SK-N-SH (cell line): ENCODE measurements at regions of chr7 and their contacts with region 1.

Region 1: DNA sequence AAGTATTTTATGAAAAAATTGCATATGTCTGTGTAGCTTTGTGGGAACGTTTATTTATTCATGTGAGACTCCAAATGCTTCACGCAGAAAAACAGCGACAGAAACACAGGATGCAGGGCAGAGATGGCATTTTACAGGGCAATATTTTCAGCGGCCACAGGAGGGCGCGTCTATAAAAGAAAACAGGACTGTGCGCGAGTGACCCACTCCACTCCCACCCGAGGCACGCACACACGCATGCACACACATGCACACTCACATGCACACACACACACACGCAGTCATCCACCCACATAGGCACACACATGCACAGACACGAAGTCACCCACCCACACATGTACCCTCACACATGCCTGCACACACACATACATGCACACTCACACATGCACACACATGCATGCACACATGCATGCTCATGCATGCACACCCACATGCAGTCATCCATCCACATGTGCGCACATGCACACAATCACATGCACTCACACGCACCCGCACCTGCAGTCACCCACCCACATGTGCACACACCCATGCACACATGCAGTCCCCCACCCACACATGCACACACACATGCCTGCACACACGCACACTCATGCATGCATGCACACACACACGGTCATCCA is 96.3 kb downstream of the DNAJB6 start:
- DNase-seq: peak; percentile 88
- H3K4me3 ChIP-seq: no peak overlapping the region
- H3K27ac ChIP-seq: no peak overlapping the region
- H3K4me1 ChIP-seq: peaks cover 0 to 11% of the 10 kb centered on the region in 2 experiments; a peak in 1 of 4 replicates
- H3K27me3 ChIP-seq: no peaks in the 10 kb centered on the region
- CTCF ChIP-seq: peak; percentile 82
- EP300 ChIP-seq: no peak
- RAD21 ChIP-seq: peak; percentile 89

Region 2: DNA sequence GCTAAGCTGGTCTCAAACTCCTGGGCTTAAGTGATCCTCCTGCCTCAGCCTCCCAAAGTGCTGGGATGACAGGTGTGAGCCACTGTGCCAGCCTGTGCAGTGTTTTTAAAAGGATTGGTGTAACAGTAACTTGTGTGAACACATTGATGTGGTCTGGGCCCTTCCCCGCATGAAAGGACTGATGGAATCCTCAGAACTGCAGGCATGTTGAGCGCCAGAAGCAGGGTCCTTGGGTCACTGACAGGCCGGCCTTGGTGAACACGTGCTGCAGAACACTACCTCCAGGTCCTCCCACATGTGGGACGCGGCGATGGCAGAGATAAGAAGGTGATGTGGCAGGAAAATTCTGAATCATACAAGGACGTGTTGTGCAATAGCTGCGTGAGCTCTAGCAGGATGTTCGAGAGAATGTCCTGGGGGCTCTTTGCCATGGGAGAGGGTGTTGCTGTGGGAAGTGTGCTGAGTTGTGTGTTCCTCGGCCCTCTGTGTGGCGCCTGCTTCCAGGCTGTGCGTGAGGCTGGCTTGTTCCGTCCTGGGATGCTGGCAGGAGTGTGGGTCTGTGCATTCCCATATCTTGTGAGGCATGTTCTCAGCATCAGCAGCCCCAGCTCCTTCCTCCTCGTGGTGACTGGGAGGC is 28.1 kb before region 1 on chr7:
- CTCF ChIA-PET with region 1: interaction called, 11 read pairs
- POLR2A ChIA-PET with region 1: no interaction called
- DNase-seq: peak; percentile 82
- H3K4me3 ChIP-seq: no peak overlapping the region
- H3K27ac ChIP-seq: peak overlapping the region; percentile 5 to 12; a peak in 1 of 4 replicates
- H3K4me1 ChIP-seq: peaks cover 0 to 29% of the 10 kb centered on the region in 2 experiments; a peak in 2 of 4 replicates
- H3K27me3 ChIP-seq: no peaks in the 10 kb centered on the region
- CTCF ChIP-seq: no peak
- EP300 ChIP-seq: no peak; a peak in 1 of 4 replicates
- RAD21 ChIP-seq: no peak

Region 3: DNA sequence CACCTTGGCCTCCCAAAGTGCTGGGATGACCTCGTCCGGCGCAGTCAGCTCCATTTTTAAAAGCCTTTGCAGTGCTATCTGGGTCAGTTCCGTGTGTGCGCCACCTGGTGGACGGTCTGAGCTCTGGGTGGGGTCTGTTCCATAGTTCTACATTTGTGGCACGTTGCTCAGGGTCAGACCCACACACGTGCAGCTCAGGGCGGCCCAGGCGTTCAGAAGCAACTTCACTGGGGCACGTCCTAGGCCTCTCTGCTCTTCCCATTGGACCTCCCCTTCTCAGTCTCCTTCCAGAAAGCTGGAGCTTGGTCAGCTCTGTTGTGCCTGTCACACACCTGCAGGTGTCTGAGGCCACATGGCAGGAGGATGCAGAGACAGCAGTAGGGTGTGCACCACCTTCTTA is 41.6 kb after region 1 on chr7:
- CTCF ChIA-PET with region 1: interaction called, 10 read pairs
- POLR2A ChIA-PET with region 1: no interaction called
- DNase-seq: no peak
- H3K4me3 ChIP-seq: no peak overlapping the region
- H3K27ac ChIP-seq: no peak overlapping the region
- H3K4me1 ChIP-seq: no peaks in the 10 kb centered on the region
- H3K27me3 ChIP-seq: no peaks in the 10 kb centered on the region
- CTCF ChIP-seq: peak; percentile 40
- EP300 ChIP-seq: no peak
- RAD21 ChIP-seq: no peak

Region 4: DNA sequence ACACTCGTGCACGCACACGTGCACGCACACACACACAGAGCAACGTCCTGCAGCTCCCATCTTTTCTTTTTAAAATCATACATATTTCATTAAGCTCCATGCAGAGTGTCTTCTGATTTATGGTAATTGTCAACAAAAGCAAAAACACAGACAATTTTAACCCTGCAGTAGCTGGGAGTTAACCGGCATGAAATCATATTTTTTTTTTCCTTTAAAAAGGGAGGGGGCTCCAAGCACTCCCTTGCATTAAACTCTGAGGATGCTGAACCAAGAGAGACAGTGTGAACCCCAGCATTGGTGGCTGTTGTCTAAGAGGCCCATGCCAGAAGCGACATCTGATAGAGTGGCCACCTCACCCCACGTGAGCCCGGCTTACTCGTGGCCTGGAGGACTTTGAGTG is 446.3 kb after region 1 on chr7:
- CTCF ChIA-PET with region 1: interaction called, 11 read pairs
- POLR2A ChIA-PET with region 1: no interaction called
- DNase-seq: no peak
- H3K4me3 ChIP-seq: no peak overlapping the region
- H3K27ac ChIP-seq: no peak overlapping the region
- H3K4me1 ChIP-seq: peaks cover 0 to 2% of the 10 kb centered on the region in 2 experiments; a peak in 1 of 4 replicates
- H3K27me3 ChIP-seq: no peaks in the 10 kb centered on the region
- CTCF ChIP-seq: no peak
- EP300 ChIP-seq: no peak
- RAD21 ChIP-seq: no peak